ENCODE measurements at regions of chr15 and their contacts with region 1.

Region 1: GRCh38 chr15:89430530-89431341 is 65.6 kb downstream of the RHCG start:
- DNase-seq: no peak
- H3K4me3 ChIP-seq: peak overlapping the region; percentile 58
- CTCF ChIP-seq: peak; percentile 97

Region 2: GRCh38 chr15:89378296-89379151 is 52.2 kb before region 1 on chr15:
- CTCF ChIA-PET with region 1: interaction called, 22 read pairs
- POLR2A ChIA-PET with region 1: no interaction called
- DNase-seq: no peak
- H3K4me3 ChIP-seq: no peak overlapping the region
- CTCF ChIP-seq: no peak

Region 3: DNA sequence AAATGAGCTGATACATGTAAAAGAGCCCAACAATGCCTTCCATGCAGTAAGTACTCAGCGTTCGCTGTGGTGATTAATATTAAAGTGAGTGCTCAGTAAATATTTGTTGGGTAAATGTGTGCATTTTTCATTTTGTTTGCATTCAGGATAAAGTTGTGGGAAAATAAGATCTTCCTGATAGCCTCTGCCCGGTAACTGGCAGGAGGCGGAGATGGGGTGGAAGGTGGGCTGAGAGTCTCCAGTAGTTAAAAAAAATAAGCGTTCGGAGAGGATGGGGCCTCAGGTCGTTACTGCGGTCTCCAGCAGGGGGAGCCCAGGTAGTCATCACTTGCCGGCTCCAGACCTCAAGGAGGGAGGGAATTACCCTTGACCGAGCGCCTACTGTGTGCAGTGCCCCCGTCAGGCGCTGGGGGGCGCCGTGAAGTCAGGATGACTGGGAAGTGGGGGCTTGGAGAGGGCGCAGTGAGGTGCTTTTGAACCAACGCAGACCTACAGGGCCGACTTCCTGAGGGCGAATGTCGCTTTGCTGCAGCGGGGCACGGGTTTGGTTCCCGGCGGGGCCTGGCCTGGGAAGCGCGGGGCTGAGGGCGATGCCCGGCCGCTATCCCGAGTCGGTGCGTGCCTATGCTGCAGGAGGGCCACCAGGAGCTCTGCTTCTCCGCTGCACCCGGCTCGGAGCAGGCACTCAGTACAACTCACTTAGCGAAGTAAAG is 14.4 kb before region 1 on chr15:
- CTCF ChIA-PET with region 1: interaction called, 70 read pairs
- POLR2A ChIA-PET with region 1: no interaction called
- DNase-seq: no peak
- H3K4me3 ChIP-seq: no peak overlapping the region
- CTCF ChIP-seq: peak; percentile 74

Region 4: GRCh38 chr15:89442671-89443307 is 12.1 kb after region 1 on chr15:
- CTCF ChIA-PET with region 1: interaction called, 42 read pairs
- POLR2A ChIA-PET with region 1: interaction called, 3 read pairs
- DNase-seq: no peak
- H3K4me3 ChIP-seq: no peak overlapping the region
- CTCF ChIP-seq: peak; percentile 57

Region 5: DNA sequence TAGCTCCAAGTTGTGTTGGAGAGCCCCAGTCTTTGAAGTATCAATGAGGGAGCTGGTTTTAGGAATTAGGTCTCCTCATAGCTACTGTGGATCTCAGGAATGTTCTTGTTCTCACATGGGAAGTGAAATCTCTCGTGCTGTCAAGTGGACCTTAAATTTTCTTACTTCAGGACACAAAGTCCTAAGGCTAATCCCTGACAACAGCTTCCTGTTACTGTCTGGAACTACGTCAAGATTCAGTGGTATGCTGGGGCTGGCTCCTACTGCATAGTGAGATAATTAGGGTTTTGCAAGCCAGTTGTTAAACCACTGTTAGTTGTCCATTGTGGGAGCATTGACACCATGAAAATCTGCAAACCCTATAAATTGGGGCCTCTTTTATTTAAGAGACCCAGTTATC is 297.5 kb after region 1 on chr15:
- CTCF ChIA-PET with region 1: no interaction called
- POLR2A ChIA-PET with region 1: no interaction called
- DNase-seq: no peak
- H3K4me3 ChIP-seq: no peak overlapping the region
- CTCF ChIP-seq: no peak